Sciatic nerve (tissue), 2 donors: ENCODE measurements at regions of chr3 and their contacts with region 1.

Region 1: GRCh38 chr3:168165390-168166269 is 69.9 kb upstream of the GOLIM4 start:
- DNase-seq: peak; percentile 71
- ATAC-seq: peak; percentile 82

Region 2: GRCh38 chr3:167958141-167958540 is 207.5 kb before region 1 on chr3:
- intact Hi-C with region 1: no loop called
- DNase-seq: no peak
- ATAC-seq: no peak

Region 3: GRCh38 chr3:168040607-168041208 is 124.9 kb before region 1 on chr3:
- intact Hi-C with region 1: loop called (anchors 5 kb)
- DNase-seq: no peak
- ATAC-seq: no peak